ENCODE measurements at regions of chr10 and their contacts with region 1.

Region 1: GRCh38 chr10:29588629-29589421 is 45.9 kb downstream of the SVIL start:
- DNase-seq: no peak
- ATAC-seq: no peak
- H3K4me3 ChIP-seq: no peak overlapping the region
- H3K27ac ChIP-seq: no peak overlapping the region
- H3K4me1 ChIP-seq: peaks cover 8% of the 10 kb centered on the region; the same call in 2 of the 3 replicates
- CTCF ChIP-seq: no peak
- EP300 ChIP-seq: no peak
- POLR2A ChIP-seq: no peak
- RAD21 ChIP-seq: no peak

Region 2: DNA sequence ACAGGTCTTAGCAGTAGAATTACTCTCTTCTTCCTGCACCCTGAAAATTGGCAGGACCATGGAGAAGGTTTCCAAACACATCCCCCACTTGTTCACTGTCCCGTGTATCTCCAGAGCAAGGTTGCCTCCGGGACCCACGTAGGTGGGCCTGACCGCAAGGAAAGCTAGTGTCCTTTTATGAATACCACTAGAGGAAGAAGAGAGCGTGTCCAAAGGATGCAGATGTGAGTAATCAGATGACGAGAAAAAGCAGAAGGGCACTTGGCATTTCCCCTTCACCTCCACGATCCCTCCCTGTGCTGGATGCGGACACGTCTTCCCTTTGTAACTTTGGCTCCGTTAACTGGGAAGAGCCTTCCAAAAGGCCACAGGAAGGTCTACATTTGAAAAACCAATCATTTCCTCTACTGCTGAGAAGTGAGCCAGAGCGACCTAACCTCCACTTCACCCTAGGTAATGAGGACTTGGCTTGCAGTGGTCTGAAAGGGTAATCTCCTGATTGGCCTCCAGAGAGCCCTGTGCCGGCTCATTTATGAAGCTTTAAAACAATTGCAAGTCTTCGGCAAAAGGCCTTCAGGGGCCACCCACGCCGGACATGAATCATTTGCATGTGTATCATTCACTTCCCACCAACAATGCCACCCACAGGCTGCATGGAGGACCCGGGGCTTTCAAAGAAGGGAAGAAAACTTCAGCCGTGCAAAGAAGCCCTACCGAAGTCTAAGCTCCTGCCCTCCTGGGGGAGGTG is 244.6 kb before region 1 on chr10:
- CTCF ChIA-PET with region 1: no interaction called
- POLR2A ChIA-PET with region 1: no interaction called
- DNase-seq: no peak
- ATAC-seq: no peak
- H3K4me3 ChIP-seq: no peak overlapping the region
- H3K27ac ChIP-seq: no peak overlapping the region
- H3K4me1 ChIP-seq: no peaks in the 10 kb centered on the region
- CTCF ChIP-seq: no peak
- EP300 ChIP-seq: no peak
- POLR2A ChIP-seq: no peak
- RAD21 ChIP-seq: no peak

Region 3: DNA sequence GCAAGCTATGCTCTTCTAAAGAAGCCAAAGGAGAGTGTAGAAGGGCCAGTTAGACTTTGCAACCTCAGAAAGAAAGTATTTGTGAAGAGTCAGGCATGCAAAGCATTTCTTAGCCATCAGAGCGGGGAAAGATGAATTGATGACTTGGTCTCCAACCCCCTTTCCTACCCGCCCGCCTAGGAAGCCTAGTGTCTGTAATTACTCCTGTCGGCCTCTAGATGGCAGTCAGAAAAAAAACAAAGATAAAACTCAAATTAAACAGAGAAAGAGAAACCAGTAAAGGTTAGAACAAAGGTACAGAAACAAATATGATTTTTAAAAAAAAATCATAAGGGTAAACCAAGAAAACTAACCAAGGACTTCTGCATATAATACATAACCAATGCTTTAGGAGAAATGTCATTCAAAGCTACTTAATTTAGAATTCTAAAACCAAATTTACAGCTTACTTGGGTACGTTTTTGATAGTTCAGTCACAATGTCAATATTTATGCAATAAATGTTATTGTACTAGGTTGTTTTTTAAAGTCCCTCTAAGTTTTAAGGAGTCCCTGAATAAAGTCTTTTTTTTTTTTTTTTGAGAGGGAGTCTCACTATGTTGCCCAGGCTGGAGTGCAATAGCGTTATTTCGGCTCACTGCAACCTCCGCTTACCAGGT is 202.4 kb before region 1 on chr10:
- CTCF ChIA-PET with region 1: no interaction called
- POLR2A ChIA-PET with region 1: no interaction called
- DNase-seq: peak; percentile 34 to 40
- ATAC-seq: peak; percentile 67 to 79
- H3K4me3 ChIP-seq: no peak overlapping the region
- H3K27ac ChIP-seq: no peak overlapping the region
- H3K4me1 ChIP-seq: no peaks in the 10 kb centered on the region
- CTCF ChIP-seq: peak; percentile 62
- EP300 ChIP-seq: no peak
- POLR2A ChIP-seq: no peak
- RAD21 ChIP-seq: peak in 1 of 2 experiments; percentile 27; a peak in 2 of 5 replicates

Region 4: GRCh38 chr10:29555746-29556481 is 32.9 kb before region 1 on chr10:
- CTCF ChIA-PET with region 1: interaction called, 13 read pairs
- POLR2A ChIA-PET with region 1: no interaction called
- DNase-seq: no peak
- ATAC-seq: 0 out of 6 replicates have a peak, but pooled peaks of 1 of the 2 experiments have one; percentile 24
- H3K4me3 ChIP-seq: no peak overlapping the region
- H3K27ac ChIP-seq: no peak overlapping the region
- H3K4me1 ChIP-seq: peaks cover 18% of the 10 kb centered on the region
- CTCF ChIP-seq: no peak
- EP300 ChIP-seq: no peak
- POLR2A ChIP-seq: no peak
- RAD21 ChIP-seq: no peak

Region 5: DNA sequence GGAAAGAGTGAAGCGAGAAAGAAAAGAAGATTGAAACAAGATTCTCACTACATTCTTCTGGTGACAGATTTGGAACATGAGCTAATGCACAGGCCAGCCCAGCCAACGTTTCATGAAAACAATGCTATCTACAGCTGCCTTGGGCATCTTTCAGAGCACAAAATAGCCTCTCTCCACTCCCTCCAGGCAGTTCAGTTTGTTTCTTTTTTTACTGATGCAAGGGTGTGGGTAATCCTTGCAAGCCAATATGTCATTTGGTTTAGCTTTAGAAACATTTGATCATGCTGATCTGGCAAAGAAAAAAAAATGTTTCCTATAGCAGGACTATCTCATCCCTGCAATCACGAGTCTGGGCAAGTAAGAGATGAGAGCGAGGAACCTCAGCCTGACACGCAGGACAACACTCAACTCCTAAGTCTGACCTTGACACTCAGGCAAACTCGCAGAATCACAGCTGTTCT is 10.1 kb after region 1 on chr10:
- CTCF ChIA-PET with region 1: interaction called, 14 read pairs
- POLR2A ChIA-PET with region 1: no interaction called
- DNase-seq: no peak
- ATAC-seq: no peak
- H3K4me3 ChIP-seq: no peak overlapping the region
- H3K27ac ChIP-seq: no peak overlapping the region
- H3K4me1 ChIP-seq: no peaks in the 10 kb centered on the region
- CTCF ChIP-seq: no peak
- EP300 ChIP-seq: no peak
- POLR2A ChIP-seq: no peak
- RAD21 ChIP-seq: no peak

Region 6: GRCh38 chr10:29613791-29614190 is 25.0 kb after region 1 on chr10:
- CTCF ChIA-PET with region 1: interaction called, 34 read pairs
- POLR2A ChIA-PET with region 1: no interaction called
- DNase-seq: no peak
- ATAC-seq: no peak
- H3K4me3 ChIP-seq: no peak overlapping the region
- H3K27ac ChIP-seq: no peak overlapping the region
- H3K4me1 ChIP-seq: peaks cover 8% of the 10 kb centered on the region
- CTCF ChIP-seq: no peak
- EP300 ChIP-seq: no peak
- POLR2A ChIP-seq: no peak
- RAD21 ChIP-seq: no peak